Uterus (tissue), 4 donors: ENCODE measurements at regions of chr7 and their contacts with region 1.

Region 1: GRCh38 chr7:5494683-5495561 is 71.3 kb upstream of the TNRC18 start:
- DNase-seq: peak; percentile 70 to 81
- H3K4me3 ChIP-seq: no peak overlapping the region
- H3K27ac ChIP-seq: peak overlapping the region; percentile 24 to 34
- H3K4me1 ChIP-seq: peaks cover 0 to 12% of the 10 kb centered on the region in 2 donors
- H3K27me3 ChIP-seq: no peaks in the 10 kb centered on the region
- CTCF ChIP-seq: peak; percentile 94 to 96 (median 94)
- POLR2A ChIP-seq: no peak

Region 2: GRCh38 chr7:4307316-4308204 is 1187.4 kb before region 1 on chr7:
- intact Hi-C with region 1: no loop called
- DNase-seq: no peak
- H3K4me3 ChIP-seq: no peak overlapping the region
- H3K27ac ChIP-seq: no peak overlapping the region
- H3K4me1 ChIP-seq: no peaks in the 10 kb centered on the region
- H3K27me3 ChIP-seq: no peaks in the 10 kb centered on the region
- CTCF ChIP-seq: no peak
- POLR2A ChIP-seq: no peak

Region 3: GRCh38 chr7:5406957-5407945 is 87.7 kb before region 1 on chr7:
- intact Hi-C with region 1: no loop called
- DNase-seq: no peak
- H3K4me3 ChIP-seq: no peak overlapping the region
- H3K27ac ChIP-seq: peak overlapping the region; percentile 36 to 44
- H3K4me1 ChIP-seq: peaks cover 3 to 19% of the 10 kb centered on the region in 2 donors
- H3K27me3 ChIP-seq: no peaks in the 10 kb centered on the region
- CTCF ChIP-seq: no peak
- POLR2A ChIP-seq: no peak

Region 4: GRCh38 chr7:5677538-5678294 is 182.8 kb after region 1 on chr7:
- intact Hi-C with region 1: loop called (anchors 10 kb)
- DNase-seq: peak; percentile 73 to 75
- H3K4me3 ChIP-seq: no peak overlapping the region
- H3K27ac ChIP-seq: peak overlapping the region in 1 of 2 donors; percentile 70
- H3K4me1 ChIP-seq: peaks cover 10 to 23% of the 10 kb centered on the region in 2 donors
- H3K27me3 ChIP-seq: no peaks in the 10 kb centered on the region
- CTCF ChIP-seq: peak; percentile 64 to 81 (median 80)
- POLR2A ChIP-seq: no peak

Region 5: DNA sequence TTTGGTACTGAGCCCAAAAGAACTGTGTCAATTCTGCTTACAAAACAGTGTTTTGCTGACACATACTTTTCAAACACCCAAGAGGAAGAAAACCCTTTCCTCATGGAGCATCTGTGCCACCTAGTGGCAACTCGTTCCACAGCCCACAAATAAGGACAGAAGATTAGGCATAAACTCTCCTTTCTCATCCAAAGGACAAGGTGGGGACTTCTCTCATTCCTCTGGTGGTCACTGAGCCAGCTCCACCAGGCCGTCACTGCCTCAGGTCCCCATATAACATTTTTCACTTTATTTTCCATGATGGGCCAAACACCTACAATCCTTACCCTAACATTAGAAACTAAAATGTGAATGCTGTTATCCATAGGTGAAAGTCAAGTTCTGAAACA is 209.6 kb after region 1 on chr7:
- intact Hi-C with region 1: loop called (anchors 10 kb)
- DNase-seq: peak; percentile 84 to 86
- H3K4me3 ChIP-seq: no peak overlapping the region
- H3K27ac ChIP-seq: peak overlapping the region; percentile 44 to 56
- H3K4me1 ChIP-seq: no peaks in the 10 kb centered on the region
- H3K27me3 ChIP-seq: no peaks in the 10 kb centered on the region
- CTCF ChIP-seq: peak; percentile 92 to 96 (median 94)
- POLR2A ChIP-seq: no peak